GM10248 (cell line): ENCODE measurements at regions of chr9 and their contacts with region 1.

Region 1: DNA sequence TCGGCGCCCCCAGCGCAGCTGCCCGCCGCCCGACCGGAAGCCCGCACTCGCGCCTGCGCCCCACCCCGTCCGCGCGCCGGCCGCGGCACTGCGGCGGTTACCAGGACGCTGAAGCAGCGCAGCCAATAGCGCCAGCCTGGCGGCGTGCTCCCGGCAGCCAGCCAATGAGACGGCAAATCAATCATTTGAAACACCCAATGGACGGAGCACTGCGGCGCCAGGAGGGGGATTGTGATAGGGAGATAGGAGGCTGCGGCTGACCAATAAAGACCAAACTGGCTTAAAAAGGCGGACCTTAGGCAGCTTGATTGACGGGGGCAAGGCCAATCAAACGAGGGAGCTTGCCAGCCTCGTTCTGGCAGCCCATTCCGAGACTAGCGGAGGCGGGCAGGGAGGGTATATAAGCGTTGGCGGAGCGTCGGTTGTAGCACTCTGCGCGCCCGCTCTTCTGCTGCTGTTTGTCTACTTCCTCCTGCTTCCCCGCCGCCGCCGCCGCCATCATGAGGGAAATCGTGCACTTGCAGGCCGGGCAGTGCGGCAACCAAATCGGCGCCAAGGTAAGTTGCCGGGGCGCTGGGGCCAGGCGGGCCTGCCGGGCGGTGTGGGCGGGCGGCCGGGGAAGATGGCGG is at the start of gene TUBB4B:
- DNase-seq: peak; percentile 99
- CTCF ChIP-seq: no peak

Region 2: GRCh38 chr9:137070201-137070905 is 170.6 kb before region 1 on chr9 and contains the start of gene SAPCD2:
- CTCF ChIA-PET with region 1: interaction called, 16 read pairs
- POLR2A ChIA-PET with region 1: interaction called, 4 read pairs
- DNase-seq: peak; percentile 94
- CTCF ChIP-seq: no peak

Region 3: DNA sequence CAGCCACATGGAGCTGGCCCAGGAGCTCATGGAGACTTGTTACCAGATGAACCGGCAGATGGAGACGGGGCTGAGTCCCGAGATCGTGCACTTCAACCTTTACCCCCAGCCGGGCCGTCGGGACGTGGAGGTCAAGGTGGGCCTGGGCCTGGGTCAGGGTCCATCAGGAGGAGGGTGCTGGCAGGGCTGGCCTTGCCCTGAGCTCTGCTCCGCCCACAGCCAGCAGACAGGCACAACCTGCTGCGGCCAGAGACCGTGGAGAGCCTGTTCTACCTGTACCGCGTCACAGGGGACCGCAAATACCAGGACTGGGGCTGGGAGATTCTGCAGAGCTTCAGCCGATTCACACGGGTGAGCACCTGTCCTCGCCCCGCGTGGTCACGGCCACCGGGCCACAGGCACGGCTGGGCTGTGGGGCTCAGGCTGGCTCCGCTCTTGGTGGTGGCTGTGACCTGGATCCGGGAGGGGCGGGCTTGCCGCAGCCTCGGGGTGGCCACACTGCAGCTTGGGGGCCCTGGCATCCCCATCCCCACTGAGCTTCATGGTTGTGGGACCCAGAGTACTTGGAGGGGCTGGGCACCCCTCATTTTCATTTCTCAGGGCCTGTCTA is 133.6 kb before region 1 on chr9:
- CTCF ChIA-PET with region 1: interaction called, 16 read pairs
- POLR2A ChIA-PET with region 1: interaction called, 3 read pairs
- DNase-seq: no peak
- CTCF ChIP-seq: no peak

Region 4: GRCh38 chr9:137150617-137151457 is 90.1 kb before region 1 on chr9:
- CTCF ChIA-PET with region 1: interaction called, 12 read pairs
- POLR2A ChIA-PET with region 1: interaction called, 24 read pairs
- DNase-seq: peak; percentile 89
- CTCF ChIP-seq: no peak

Region 5: GRCh38 chr9:137205126-137206069 is 35.6 kb before region 1 on chr9 and contains the starts of genes NDOR1 and TMEM203:
- CTCF ChIA-PET with region 1: interaction called, 12 read pairs
- POLR2A ChIA-PET with region 1: interaction called, 7 read pairs
- DNase-seq: peak; percentile 96
- CTCF ChIP-seq: no peak

Region 6: DNA sequence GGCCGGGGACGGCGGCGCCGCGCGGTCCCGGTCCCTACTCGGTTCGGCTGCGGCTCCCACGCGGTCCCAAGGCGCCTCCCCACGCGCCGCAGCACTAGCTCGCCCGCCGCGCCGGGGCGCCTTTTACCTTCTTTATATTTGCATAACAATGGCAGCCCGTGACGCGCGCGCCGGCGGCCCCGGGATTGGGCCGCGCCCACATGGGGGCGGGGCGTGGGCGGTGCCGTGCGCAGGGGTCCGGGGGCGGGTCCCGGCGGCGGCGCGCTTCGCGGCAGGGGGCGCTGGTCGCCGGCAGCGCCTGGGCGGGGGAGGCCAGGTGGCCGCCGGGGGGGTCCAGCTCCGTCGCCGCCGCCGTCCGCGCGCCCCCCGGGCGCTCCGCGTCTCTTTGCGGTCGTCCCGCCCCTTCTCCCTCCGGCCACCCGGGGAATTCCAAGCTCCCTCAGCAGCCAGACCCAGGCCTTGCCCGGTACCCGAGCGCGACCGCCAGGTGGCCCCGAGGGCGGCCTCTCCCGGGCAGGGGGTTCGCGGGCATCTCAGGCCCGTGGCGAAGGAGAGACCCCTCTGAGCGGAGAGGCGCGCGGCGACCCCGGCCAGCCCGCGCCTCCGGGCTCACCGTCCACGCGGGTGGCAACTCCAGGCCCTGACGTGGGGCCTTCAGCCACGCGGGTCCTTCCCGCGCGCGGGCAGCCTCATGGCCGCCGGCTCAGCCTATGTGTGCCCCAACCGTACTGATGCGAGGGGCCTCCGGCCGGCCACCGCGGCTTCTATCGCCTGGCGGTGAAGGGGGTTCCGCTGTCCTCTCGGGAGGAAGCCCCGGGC is 61.4 kb after region 1 on chr9 and contains the start of gene NRARP:
- CTCF ChIA-PET with region 1: interaction called, 3 read pairs
- POLR2A ChIA-PET with region 1: interaction called, 12 read pairs
- DNase-seq: peak; percentile 93
- CTCF ChIP-seq: peak; percentile 46

Region 7: GRCh38 chr9:137564817-137565411 is 323.9 kb after region 1 on chr9:
- CTCF ChIA-PET with region 1: no interaction called
- POLR2A ChIA-PET with region 1: no interaction called
- DNase-seq: no peak
- CTCF ChIP-seq: no peak